Activated CD4-positive, alpha-beta T cell treated with anti-CD3 and anti-CD28 coated beads for 36 hours (primary cell): ENCODE measurements at regions of chr3 and their contacts with region 1.

Region 1: GRCh38 chr3:53513556-53514190 is 19.3 kb downstream of the CACNA1D start:
- DNase-seq: peak; percentile 16
- ATAC-seq: peak; percentile 97
- H3K4me3 Mint-ChIP-seq: no peak overlapping the region
- H3K27ac Mint-ChIP-seq: no peak overlapping the region
- H3K4me1 Mint-ChIP-seq: no peaks in the 10 kb centered on the region
- H3K27me3 Mint-ChIP-seq: peaks cover 24% of the 10 kb centered on the region

Region 2: DNA sequence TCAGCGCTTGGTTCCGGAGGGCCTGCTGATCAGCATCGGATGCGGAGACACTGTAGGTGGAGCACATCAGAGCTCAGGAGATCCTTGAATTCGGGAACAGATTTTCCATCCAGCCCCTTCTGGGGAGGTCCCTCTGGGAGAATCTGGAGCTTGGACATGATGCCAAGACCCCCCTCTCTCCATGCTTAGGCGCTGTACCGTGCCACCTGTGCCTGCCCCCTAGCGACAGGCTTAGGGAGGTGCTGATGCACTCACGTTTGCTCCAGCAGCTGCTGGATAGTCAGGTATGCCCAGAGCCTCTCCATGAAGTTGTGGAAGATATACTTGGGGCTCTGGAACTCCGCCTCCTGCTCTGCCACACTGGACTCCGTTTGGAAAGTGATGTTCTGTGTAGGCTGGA is 692.9 kb before region 1 on chr3:
- CTCF ChIA-PET with region 1: no interaction called
- POLR2A ChIA-PET with region 1: no interaction called
- intact Hi-C with region 1: no loop called
- DNase-seq: peak; percentile 60
- ATAC-seq: peak; percentile 89
- H3K4me3 Mint-ChIP-seq: no peak overlapping the region
- H3K27ac Mint-ChIP-seq: no peak overlapping the region
- H3K4me1 Mint-ChIP-seq: no peaks in the 10 kb centered on the region
- H3K27me3 Mint-ChIP-seq: no peaks in the 10 kb centered on the region

Region 3: GRCh38 chr3:53295410-53295809 is 218.3 kb before region 1 on chr3:
- CTCF ChIA-PET with region 1: no interaction called
- POLR2A ChIA-PET with region 1: interaction called, 3 read pairs
- intact Hi-C with region 1: loop called in 1 of 2 experiments (anchors 5 kb)
- DNase-seq: no peak
- ATAC-seq: no peak
- H3K4me3 Mint-ChIP-seq: no peak overlapping the region
- H3K27ac Mint-ChIP-seq: no peak overlapping the region
- H3K4me1 Mint-ChIP-seq: no peaks in the 10 kb centered on the region
- H3K27me3 Mint-ChIP-seq: no peaks in the 10 kb centered on the region

Region 4: GRCh38 chr3:53375019-53375418 is 138.7 kb before region 1 on chr3:
- CTCF ChIA-PET with region 1: interaction called, 5 read pairs
- POLR2A ChIA-PET with region 1: no interaction called
- intact Hi-C with region 1: loop called (anchors 1 to 10 kb)
- DNase-seq: peak; percentile 85
- ATAC-seq: peak; percentile 90
- H3K4me3 Mint-ChIP-seq: no peak overlapping the region
- H3K27ac Mint-ChIP-seq: no peak overlapping the region
- H3K4me1 Mint-ChIP-seq: no peaks in the 10 kb centered on the region
- H3K27me3 Mint-ChIP-seq: peaks cover 31% of the 10 kb centered on the region

Region 5: DNA sequence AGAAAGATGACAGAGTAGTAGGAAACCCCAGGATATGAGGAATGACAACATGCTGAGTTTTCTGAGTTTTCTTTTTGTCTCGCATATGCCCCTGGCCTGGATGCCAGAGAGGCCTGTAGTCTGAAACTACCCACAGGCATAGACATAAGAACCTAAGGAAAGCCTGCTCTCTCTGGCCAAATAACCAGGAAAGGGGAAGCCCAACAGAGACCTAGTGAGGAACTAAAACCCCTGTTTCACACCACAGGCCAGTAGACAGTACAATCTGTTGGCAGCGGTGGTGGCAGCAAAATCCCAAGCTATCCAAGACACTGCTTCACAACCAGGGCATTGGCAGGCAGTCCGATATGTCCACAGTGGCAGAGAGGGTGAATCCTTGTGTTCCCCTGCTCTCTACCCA is 111.3 kb before region 1 on chr3:
- CTCF ChIA-PET with region 1: no interaction called
- POLR2A ChIA-PET with region 1: no interaction called
- intact Hi-C with region 1: no loop called
- DNase-seq: no peak
- ATAC-seq: no peak
- H3K4me3 Mint-ChIP-seq: no peak overlapping the region
- H3K27ac Mint-ChIP-seq: no peak overlapping the region
- H3K4me1 Mint-ChIP-seq: peaks cover 2% of the 10 kb centered on the region
- H3K27me3 Mint-ChIP-seq: peaks cover 12% of the 10 kb centered on the region

Region 6: DNA sequence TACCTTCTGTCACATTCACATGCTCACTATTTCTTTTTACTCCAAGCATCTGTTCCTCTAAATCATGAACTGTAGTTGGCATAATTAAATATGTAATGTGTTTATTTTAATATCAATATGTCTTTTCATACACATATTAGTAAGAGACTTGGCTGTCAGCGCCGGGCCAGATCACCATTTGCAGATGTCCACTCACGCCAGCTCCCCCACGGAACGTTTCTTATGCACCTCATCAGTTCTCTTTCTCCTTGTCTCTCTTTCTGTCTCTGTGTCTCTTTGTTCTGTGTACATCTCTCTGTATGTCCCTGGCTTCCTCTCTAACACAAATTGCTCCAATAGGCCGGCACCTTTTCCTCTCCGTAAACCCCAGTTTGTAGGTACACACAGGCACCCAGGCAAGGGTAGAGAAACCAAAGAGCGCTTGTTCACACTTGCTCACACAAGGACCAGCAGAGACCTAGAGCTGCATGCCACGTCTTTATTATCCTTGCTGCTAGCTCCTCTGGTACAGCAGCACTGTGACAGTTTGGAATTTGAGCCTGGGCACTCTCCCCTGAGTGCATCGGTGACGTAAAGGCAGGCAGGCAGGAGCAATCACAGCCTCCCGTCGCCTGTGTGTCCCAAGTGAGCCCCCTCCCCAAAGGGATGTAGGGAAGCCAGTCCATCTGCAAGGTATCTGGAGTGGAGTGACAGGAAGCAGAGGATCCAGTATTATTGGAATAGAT is 21.2 kb after region 1 on chr3:
- CTCF ChIA-PET with region 1: no interaction called
- POLR2A ChIA-PET with region 1: no interaction called
- intact Hi-C with region 1: no loop called
- DNase-seq: no peak
- ATAC-seq: no peak
- H3K4me3 Mint-ChIP-seq: no peak overlapping the region
- H3K27ac Mint-ChIP-seq: no peak overlapping the region
- H3K4me1 Mint-ChIP-seq: no peaks in the 10 kb centered on the region
- H3K27me3 Mint-ChIP-seq: peaks cover 28% of the 10 kb centered on the region

Region 7: GRCh38 chr3:54988838-54989630 is 1475.4 kb after region 1 on chr3:
- CTCF ChIA-PET with region 1: no interaction called
- POLR2A ChIA-PET with region 1: no interaction called
- intact Hi-C with region 1: no loop called
- DNase-seq: no peak
- ATAC-seq: no peak
- H3K4me3 Mint-ChIP-seq: no peak overlapping the region
- H3K27ac Mint-ChIP-seq: no peak overlapping the region
- H3K4me1 Mint-ChIP-seq: no peaks in the 10 kb centered on the region
- H3K27me3 Mint-ChIP-seq: no peaks in the 10 kb centered on the region